GM12878 (cell line): ENCODE measurements at regions of chr1 and their contacts with region 1.

Region 1: GRCh38 chr1:154404984-154405761 is at the start of gene IL6R:
- DNase-seq: no peak
- ATAC-seq: peak; percentile 52
- H3K4me3 ChIP-seq: peak within 1 kb of the TSS; percentile 75
- H3K27ac ChIP-seq: peak within 1 kb of the TSS; percentile 83
- H3K4me1 ChIP-seq: peaks cover 68% of the 10 kb centered on the region
- H3K27me3 ChIP-seq: no peaks in the 10 kb centered on the region
- CTCF ChIP-seq: peak; percentile 46 to 63 (median 54); a peak in 5 of 6 replicates
- EP300 ChIP-seq: no peak
- POLR2A ChIP-seq: no peak; the same call in 1 of the 2 replicates
- RAD21 ChIP-seq: peak; percentile 55; the same call in 1 of the 2 replicates
- polyA plus RNA-seq, gene IL6R: 1.9 to 3.9 TPM

Region 2: GRCh38 chr1:154019269-154019668 is 385.9 kb before region 1 on chr1:
- CTCF ChIA-PET with region 1: no interaction called
- POLR2A ChIA-PET with region 1: no interaction called
- RAD21 ChIA-PET with region 1: no interaction called
- SMC1A ChIA-PET with region 1: no interaction called
- in situ Hi-C with region 1: no loop called
- intact Hi-C with region 1: no loop called
- DNase-seq: no peak
- ATAC-seq: no peak
- H3K4me3 ChIP-seq: no peak overlapping the region
- H3K27ac ChIP-seq: no peak overlapping the region
- H3K4me1 ChIP-seq: no peaks in the 10 kb centered on the region
- H3K27me3 ChIP-seq: no peaks in the 10 kb centered on the region
- CTCF ChIP-seq: no peak
- EP300 ChIP-seq: no peak
- POLR2A ChIP-seq: no peak
- RAD21 ChIP-seq: no peak

Region 3: DNA sequence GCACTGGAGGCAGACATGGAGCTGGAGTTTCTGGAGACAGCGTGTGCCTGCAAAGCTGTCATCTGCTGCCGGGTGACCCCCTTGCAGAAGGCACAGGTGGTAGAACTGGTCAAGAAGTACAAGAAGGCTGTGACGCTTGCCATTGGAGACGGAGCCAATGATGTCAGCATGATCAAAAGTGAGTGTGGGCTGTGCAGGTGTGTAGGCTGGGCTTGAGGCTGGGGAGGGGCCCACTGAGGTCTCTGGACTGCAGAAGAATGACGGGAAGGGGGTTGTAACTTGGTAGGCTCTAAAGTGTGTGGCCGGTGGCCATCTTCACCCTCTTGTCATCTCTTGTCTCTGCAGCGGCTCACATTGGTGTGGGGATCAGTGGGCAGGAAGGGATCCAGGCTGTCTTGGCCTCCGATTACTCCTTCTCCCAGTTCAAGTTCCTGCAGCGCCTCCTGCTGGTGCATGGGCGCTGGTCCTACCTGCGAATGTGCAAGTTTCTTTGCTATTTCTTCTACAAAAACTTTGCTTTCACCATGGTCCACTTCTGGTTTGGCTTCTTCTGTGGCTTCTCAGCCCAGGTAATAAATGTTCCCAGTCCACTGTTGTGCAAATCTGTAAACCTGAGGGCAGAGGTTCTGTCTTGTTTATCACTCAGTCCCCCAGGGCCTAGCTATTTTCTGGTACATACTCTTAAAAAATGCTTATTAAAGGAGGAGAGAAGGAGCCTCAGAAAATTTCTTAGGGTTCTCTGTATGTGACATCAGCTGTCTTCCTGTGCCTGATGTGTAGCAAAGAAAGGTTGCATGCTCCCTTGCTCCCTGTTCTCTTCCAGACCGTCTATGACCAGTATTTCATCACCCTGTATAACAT is 60.0 kb before region 1 on chr1:
- CTCF ChIA-PET with region 1: interaction called, 10 read pairs
- POLR2A ChIA-PET with region 1: interaction called, 4 read pairs
- RAD21 ChIA-PET with region 1: interaction called, 5 read pairs
- SMC1A ChIA-PET with region 1: no interaction called
- in situ Hi-C with region 1: no loop called
- intact Hi-C with region 1: no loop called
- DNase-seq: no peak
- ATAC-seq: peak; percentile 77
- H3K4me3 ChIP-seq: no peak overlapping the region
- H3K27ac ChIP-seq: no peak overlapping the region
- H3K4me1 ChIP-seq: no peaks in the 10 kb centered on the region
- H3K27me3 ChIP-seq: no peaks in the 10 kb centered on the region
- CTCF ChIP-seq: peak; percentile 54 to 80 (median 70)
- EP300 ChIP-seq: no peak
- POLR2A ChIP-seq: no peak
- RAD21 ChIP-seq: peak; percentile 49

Region 4: GRCh38 chr1:154419620-154420571 is 14.7 kb after region 1 on chr1:
- CTCF ChIA-PET with region 1: interaction called, 11 read pairs
- POLR2A ChIA-PET with region 1: interaction called, 12 read pairs
- RAD21 ChIA-PET with region 1: interaction called, 52 read pairs
- SMC1A ChIA-PET with region 1: interaction called, 55 read pairs
- in situ Hi-C with region 1: no loop called
- intact Hi-C with region 1: no loop called
- DNase-seq: no peak
- ATAC-seq: peak; percentile 85
- H3K4me3 ChIP-seq: no peak overlapping the region
- H3K27ac ChIP-seq: peak overlapping the region; percentile 2; the same call in 1 of the 2 replicates
- H3K4me1 ChIP-seq: peaks cover 26% of the 10 kb centered on the region
- H3K27me3 ChIP-seq: no peaks in the 10 kb centered on the region
- CTCF ChIP-seq: no peak
- EP300 ChIP-seq: no peak
- POLR2A ChIP-seq: no peak
- RAD21 ChIP-seq: no peak

Region 5: GRCh38 chr1:154442006-154442740 is 37.0 kb after region 1 on chr1:
- CTCF ChIA-PET with region 1: interaction called, 67 read pairs
- POLR2A ChIA-PET with region 1: interaction called, 20 read pairs
- RAD21 ChIA-PET with region 1: interaction called, 80 read pairs
- SMC1A ChIA-PET with region 1: interaction called, 89 read pairs
- in situ Hi-C with region 1: no loop called
- intact Hi-C with region 1: loop called (anchors 2 kb)
- DNase-seq: no peak
- ATAC-seq: no peak
- H3K4me3 ChIP-seq: no peak overlapping the region
- H3K27ac ChIP-seq: no peak overlapping the region
- H3K4me1 ChIP-seq: peaks cover 43% of the 10 kb centered on the region
- H3K27me3 ChIP-seq: no peaks in the 10 kb centered on the region
- CTCF ChIP-seq: peak; percentile 31 to 57 (median 45)
- EP300 ChIP-seq: no peak
- POLR2A ChIP-seq: no peak
- RAD21 ChIP-seq: peak; percentile 29; the same call in 1 of the 2 replicates

Region 6: GRCh38 chr1:154546264-154547063 is 141.3 kb after region 1 on chr1:
- CTCF ChIA-PET with region 1: interaction called, 8 read pairs
- POLR2A ChIA-PET with region 1: no interaction called
- RAD21 ChIA-PET with region 1: interaction called, 13 read pairs
- SMC1A ChIA-PET with region 1: interaction called, 3 read pairs
- in situ Hi-C with region 1: no loop called
- intact Hi-C with region 1: no loop called
- DNase-seq: peak; percentile 13
- ATAC-seq: peak; percentile 87
- H3K4me3 ChIP-seq: no peak overlapping the region
- H3K27ac ChIP-seq: no peak overlapping the region
- H3K4me1 ChIP-seq: peaks cover 15% of the 10 kb centered on the region
- H3K27me3 ChIP-seq: no peaks in the 10 kb centered on the region; a peak in 1 of 4 replicates
- CTCF ChIP-seq: peak; percentile 72 to 86 (median 84)
- EP300 ChIP-seq: no peak
- POLR2A ChIP-seq: no peak
- RAD21 ChIP-seq: peak; percentile 98